Astrocyte of the cerebellum (primary cell): ENCODE measurements at regions of chr17 and their contacts with region 1.

Region 1: DNA sequence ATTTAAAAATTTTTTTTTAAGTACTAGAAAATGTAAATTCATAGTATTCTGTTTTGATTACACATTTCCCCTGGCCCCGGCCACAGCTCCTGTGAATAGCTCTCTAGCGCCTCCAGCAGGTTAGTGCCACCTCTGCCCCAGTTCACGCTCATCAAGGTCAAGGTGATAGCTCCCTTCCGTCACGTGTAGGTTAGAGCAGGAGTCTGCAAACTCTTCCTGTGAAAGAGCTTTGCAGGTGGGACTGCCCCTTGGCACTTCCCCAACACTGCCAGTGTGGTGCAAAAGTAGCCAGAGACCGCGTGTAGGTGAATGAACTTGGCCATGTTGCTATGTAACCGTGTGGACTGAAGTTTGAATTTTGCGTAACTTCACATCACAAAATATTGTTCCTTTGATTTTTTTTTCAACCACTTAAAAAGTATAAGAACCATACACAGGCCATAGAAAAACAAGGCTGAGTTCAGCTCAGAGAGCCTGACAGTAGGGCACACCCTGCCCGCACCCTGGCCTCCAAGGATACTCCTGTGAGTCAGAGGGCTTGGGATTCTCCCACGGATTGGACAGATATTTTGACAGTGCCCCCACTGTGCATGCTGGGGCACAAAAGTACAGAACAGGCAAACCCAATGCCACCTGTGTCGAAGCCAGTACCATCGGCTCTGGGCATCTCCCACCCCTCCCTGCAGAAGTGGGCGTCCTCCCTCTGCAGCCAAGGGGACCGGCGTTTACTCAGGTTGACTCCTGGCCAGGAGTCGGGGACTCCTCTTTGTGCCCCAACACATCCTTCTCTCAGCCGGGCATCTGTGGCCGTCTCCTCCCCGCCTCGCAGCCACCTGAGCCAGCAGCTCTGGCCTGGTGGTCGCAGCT is 92.0 kb upstream of the CHMP6 start:
- DNase-seq: no peak
- H3K4me3 ChIP-seq: no peak overlapping the region
- CTCF ChIP-seq: peak; percentile 73

Region 2: DNA sequence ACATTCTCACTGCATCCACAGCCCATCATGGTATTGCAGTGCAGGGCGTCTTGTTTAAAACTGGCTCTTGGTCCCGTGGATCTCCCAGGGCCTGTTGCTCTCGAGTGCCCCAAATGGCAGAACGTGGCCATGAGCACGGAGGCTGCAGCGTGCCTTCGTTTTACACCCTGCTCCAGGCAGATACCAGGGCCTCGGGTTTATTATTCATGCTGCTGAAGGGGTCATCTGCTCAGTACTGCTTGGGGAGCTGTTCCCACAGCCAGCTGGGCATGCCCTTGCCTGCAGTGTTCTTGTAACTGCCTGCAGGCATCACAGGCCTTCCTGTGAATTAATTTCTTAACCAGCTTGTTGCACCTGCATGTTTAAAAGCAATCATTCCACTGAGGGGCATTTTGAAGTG is 37.7 kb before region 1 on chr17:
- in situ Hi-C with region 1: loop called (anchors 5 kb)
- DNase-seq: no peak
- H3K4me3 ChIP-seq: no peak overlapping the region
- CTCF ChIP-seq: peak; percentile 77